PC-9 (cell line): ENCODE measurements at regions of chr11 and their contacts with region 1.

Region 1: DNA sequence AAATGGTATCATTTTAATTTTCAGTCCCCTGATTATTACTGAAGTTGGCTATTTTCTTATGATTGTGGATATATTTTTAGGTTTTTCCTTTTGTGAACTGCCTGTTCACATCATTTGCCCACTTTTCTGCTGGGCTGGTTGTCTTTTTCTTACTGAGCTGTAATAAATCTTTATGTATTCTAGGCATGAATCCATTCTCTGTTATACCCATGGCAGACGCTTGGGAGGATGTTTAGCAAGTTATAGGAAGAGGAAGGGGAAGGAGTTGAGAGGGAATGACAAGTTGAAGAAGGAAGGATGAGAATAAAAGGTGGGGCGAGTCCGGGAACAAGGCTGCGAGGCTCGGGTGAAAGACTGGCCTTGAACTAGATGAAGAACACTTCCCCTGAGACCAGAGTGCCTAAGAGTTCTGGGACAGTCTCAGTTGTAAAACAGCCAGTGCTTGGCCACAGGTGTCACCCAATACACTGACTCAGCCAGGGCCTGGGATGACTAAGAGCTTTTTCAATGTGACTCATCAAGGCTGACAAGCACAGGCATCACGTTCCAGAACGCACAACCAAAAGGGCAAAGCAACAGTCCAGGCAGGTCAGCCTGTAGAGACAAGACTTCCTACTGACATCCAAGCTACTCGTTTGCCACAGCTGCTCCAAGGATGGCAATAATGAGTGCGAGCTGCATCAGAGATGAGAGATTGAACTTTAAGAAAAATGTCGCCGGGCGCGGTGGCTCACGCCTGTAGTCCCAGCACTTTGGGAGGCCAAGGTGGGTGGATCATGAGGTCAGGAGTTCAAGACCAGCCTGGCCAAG is 35.2 kb downstream of the LRFN4 start:
- DNase-seq: peak; percentile 90 to 96
- H3K4me3 ChIP-seq: no peak overlapping the region; the same call in 1 of the 2 replicates
- H3K27ac ChIP-seq: peak overlapping the region; percentile 86
- H3K4me1 ChIP-seq: peaks cover 35% of the 10 kb centered on the region
- H3K27me3 ChIP-seq: no peaks in the 10 kb centered on the region
- CTCF ChIP-seq: no peak; the same call in 1 of the 2 replicates

Region 2: GRCh38 chr11:66855574-66856495 is 36.2 kb before region 1 on chr11:
- CTCF ChIA-PET with region 1: no interaction called
- POLR2A ChIA-PET with region 1: interaction called, 18 read pairs
- intact Hi-C with region 1: no loop called
- DNase-seq: peak; percentile 80 to 98
- H3K4me3 ChIP-seq: peak overlapping the region; percentile 99
- H3K27ac ChIP-seq: peak overlapping the region; percentile 33
- H3K4me1 ChIP-seq: peaks cover 13% of the 10 kb centered on the region
- H3K27me3 ChIP-seq: no peaks in the 10 kb centered on the region
- CTCF ChIP-seq: no peak

Region 3: GRCh38 chr11:66970808-66971442 is 78.9 kb after region 1 on chr11:
- CTCF ChIA-PET with region 1: no interaction called
- POLR2A ChIA-PET with region 1: no interaction called
- intact Hi-C with region 1: loop called (anchors 1 kb)
- DNase-seq: peak; percentile 72 to 99
- H3K4me3 ChIP-seq: peak overlapping the region; percentile 13; the same call in 1 of the 2 replicates
- H3K27ac ChIP-seq: peak overlapping the region; percentile 83
- H3K4me1 ChIP-seq: peaks cover 77% of the 10 kb centered on the region
- H3K27me3 ChIP-seq: no peaks in the 10 kb centered on the region
- CTCF ChIP-seq: no peak